ENCODE measurements at regions of chr9 and their contacts with region 1.

Region 1: DNA sequence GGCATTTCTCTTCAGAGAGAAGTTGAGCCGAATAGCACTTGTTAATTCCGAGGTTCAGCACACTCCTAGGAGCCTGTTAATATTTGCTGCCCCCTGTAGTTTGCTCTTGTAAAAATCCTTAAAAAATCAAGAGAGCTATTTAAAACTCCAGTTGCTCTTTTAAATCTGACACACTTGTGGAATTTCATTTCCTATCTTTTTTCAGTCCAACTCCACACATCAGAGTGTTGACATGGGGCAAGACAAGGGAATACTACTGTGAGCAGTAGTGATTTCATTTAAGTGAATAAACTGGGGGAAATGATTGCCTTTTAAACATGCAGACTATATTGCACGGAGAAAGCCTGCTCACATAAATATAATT is 1096.3 kb upstream of the DMAC1 start:
- DNase-seq: no peak
- ATAC-seq: peak; percentile 78
- H3K4me3 Mint-ChIP-seq: no peak overlapping the region
- H3K27ac Mint-ChIP-seq: no peak overlapping the region
- H3K4me1 Mint-ChIP-seq: peaks cover 10% of the 10 kb centered on the region
- H3K27me3 Mint-ChIP-seq: no peaks in the 10 kb centered on the region
- CTCF ChIP-seq: peak; percentile 31; the same call in 1 of the 2 replicates

Region 2: GRCh38 chr9:8907863-8908262 is 12.0 kb after region 1 on chr9:
- CTCF ChIA-PET with region 1: interaction called, 13 read pairs
- POLR2A ChIA-PET with region 1: no interaction called
- DNase-seq: no peak
- ATAC-seq: no peak
- H3K4me3 Mint-ChIP-seq: no peak overlapping the region
- H3K27ac Mint-ChIP-seq: no peak overlapping the region
- H3K4me1 Mint-ChIP-seq: no peaks in the 10 kb centered on the region
- H3K27me3 Mint-ChIP-seq: no peaks in the 10 kb centered on the region
- CTCF ChIP-seq: no peak